ENCODE measurements at regions of chr12 and their contacts with region 1.

Region 1: DNA sequence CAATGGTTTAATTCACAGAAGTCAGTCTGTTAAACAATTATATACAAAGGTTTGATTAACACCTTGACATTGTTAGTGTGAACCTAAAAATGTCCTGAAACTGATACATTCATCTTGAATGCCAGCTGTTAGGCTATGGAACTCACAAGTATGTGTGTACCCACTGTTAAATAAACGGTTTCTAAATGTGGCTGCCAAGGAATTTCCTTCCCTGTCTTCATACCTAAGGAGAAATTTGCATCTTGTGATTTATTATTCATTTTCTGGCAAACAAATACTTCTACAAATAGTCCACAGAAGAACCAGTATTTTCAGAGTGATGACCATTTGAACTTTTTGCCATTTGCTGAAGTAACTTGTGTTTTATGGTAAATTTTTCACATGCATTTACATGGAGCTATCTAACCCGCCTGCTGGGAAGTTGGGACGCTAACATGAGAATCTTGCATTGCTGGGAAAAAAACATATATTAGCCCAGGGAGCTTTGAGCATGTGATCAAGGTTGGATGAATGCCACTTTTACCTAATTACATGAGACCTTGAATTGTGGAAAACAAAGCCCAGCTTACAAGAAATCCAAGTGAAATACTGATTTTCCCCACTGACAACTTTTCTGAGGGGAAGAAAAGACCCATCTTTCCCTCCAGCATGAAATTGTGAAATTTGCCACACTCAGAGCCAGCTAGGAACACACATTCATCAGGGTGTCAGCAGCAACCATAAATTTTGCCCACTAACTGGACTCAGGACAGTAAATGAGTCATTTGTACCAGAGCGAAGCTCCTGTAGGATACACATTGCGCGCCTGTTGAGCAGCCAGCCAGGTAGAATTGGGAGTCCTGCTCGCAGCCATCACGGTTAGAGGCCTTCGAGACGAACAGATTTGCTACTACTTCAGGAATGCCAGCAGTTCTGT is 118.0 kb downstream of the KICS2 start:
- DNase-seq: no peak
- H3K4me3 ChIP-seq: no peak overlapping the region
- H3K4me3 Mint-ChIP-seq: no peak overlapping the region
- H3K27ac ChIP-seq: no peak overlapping the region
- H3K27ac Mint-ChIP-seq: no peak overlapping the region
- H3K4me1 ChIP-seq: no peaks in the 10 kb centered on the region
- H3K4me1 Mint-ChIP-seq: peaks cover 3% of the 10 kb centered on the region
- H3K27me3 ChIP-seq: no peaks in the 10 kb centered on the region
- H3K27me3 Mint-ChIP-seq: peaks cover 0 to 4% (median 0%) of the 10 kb centered on the region in 3 donors
- CTCF ChIP-seq: no peak

Region 2: DNA sequence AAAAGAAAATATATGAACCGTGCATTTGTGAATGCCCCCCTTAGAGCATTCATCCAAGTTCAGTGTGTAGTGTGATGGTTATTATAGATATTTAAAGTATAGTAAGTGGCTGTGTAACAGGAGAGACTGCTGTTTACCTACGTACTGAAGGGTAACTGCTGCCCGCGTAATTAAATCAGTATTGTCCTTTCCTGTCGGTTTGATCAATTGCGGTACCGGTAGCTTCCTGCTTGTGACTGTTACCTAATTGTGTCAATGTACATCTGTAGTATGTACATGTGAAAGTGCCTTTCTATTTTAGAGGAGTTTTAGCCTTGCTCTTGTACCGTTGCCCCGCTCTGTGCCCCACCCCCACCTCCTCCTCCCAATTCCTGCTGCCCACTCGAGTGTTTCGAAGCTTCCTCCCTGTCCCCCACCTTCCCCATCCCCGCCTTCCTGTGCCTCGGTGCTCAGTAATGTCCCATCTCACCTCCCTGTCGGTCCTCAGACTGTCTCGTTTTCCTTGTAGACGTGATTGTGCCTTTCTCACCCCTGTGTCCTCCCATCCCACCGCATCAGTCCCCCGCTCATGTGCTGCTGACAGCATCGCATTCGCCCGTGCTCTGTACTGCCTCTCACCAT is 43.0 kb after region 1 on chr12:
- intact Hi-C with region 1: no loop called
- DNase-seq: no peak
- H3K4me3 ChIP-seq: no peak overlapping the region
- H3K4me3 Mint-ChIP-seq: peak overlapping the region in 1 of 2 donors; percentile 29
- H3K27ac ChIP-seq: no peak overlapping the region
- H3K27ac Mint-ChIP-seq: peak overlapping the region in 1 of 7 donors; percentile 34
- H3K4me1 ChIP-seq: no peaks in the 10 kb centered on the region
- H3K4me1 Mint-ChIP-seq: peaks cover 5% of the 10 kb centered on the region
- H3K27me3 ChIP-seq: no peaks in the 10 kb centered on the region
- H3K27me3 Mint-ChIP-seq: peaks cover 2 to 5% (median 4%) of the 10 kb centered on the region in 3 donors
- CTCF ChIP-seq: no peak

Region 3: DNA sequence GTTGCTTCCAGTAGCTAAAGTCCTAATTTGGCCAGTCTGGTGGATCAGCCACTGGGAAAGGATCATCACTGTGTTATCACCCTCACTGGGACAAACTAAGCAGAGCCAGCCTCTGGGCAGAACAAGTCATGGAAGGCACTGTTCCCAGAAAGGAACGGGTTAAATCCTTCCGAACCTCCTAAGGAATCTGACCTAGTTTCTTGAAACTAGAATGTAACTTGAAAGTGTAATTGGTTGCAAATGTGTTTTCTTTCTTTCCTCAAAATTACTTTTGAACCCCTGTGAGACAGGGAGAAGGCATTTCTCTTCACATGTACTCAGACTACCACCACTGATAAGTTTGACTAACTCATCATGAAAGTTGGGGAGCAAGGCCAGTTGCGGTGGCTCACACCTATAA is 136.7 kb after region 1 on chr12:
- intact Hi-C with region 1: loop called in 1 of 2 experiments (anchors 10 kb)
- DNase-seq: no peak
- H3K4me3 ChIP-seq: no peak overlapping the region
- H3K4me3 Mint-ChIP-seq: no peak overlapping the region
- H3K27ac ChIP-seq: no peak overlapping the region
- H3K27ac Mint-ChIP-seq: no peak overlapping the region
- H3K4me1 ChIP-seq: peaks cover 4% of the 10 kb centered on the region in 2 donors
- H3K4me1 Mint-ChIP-seq: peaks cover 9% of the 10 kb centered on the region
- H3K27me3 ChIP-seq: no peaks in the 10 kb centered on the region
- H3K27me3 Mint-ChIP-seq: peaks cover 0 to 3% (median 3%) of the 10 kb centered on the region in 3 donors
- CTCF ChIP-seq: no peak